GM10248 (cell line): ENCODE measurements at regions of chr17 and their contacts with region 1.

Region 1: GRCh38 chr17:27299384-27300049 is 5.6 kb downstream of the WSB1 start:
- DNase-seq: no peak
- CTCF ChIP-seq: no peak

Region 2: GRCh38 chr17:27367121-27367991 is 67.8 kb after region 1 on chr17:
- CTCF ChIA-PET with region 1: no interaction called
- POLR2A ChIA-PET with region 1: no interaction called
- DNase-seq: no peak
- CTCF ChIP-seq: no peak

Region 3: DNA sequence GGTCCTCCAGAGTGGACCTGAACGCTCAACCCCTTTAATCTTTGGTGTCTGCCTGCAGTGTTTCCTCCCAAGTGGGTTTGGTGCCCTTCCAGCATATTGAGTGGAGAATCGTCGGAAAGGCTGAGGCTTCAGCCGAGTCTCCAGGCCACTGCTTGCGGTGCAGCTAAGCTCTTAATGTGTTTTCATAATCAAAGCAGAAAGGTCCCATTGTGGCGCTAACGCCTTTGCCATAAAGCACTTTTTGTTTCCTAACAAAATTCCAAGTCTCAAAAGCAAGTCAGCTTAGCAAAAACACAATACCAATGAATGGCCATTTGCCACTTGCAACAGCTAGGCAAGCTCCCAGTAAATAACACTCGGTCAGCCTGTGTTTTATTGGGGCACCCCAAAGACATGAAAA is 214.3 kb after region 1 on chr17:
- CTCF ChIA-PET with region 1: no interaction called
- POLR2A ChIA-PET with region 1: no interaction called
- DNase-seq: no peak
- CTCF ChIP-seq: no peak

Region 4: GRCh38 chr17:27529230-27529796 is 229.8 kb after region 1 on chr17:
- CTCF ChIA-PET with region 1: no interaction called
- POLR2A ChIA-PET with region 1: no interaction called
- DNase-seq: no peak
- CTCF ChIP-seq: no peak

Region 5: DNA sequence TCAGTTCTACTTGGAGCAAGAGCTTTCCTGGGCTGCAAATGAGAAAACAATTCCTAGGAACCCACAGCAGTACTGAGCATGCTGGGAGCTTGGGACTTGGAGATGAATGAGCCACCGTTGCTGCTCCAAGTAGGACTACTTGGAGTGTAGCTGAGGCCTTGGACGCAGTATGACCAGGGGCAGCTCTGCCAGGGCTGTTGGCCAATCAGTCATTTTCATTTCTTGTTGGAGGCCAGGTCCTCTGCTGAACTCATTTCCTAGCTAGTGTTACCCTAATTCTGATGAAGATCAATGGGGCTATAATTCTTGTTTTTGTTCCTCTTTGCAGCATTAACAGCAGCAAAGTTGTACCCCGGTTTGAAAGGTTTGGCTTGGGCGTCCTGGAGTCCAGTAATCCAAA is 323.5 kb after region 1 on chr17:
- CTCF ChIA-PET with region 1: no interaction called
- POLR2A ChIA-PET with region 1: interaction called, 10 read pairs
- DNase-seq: no peak
- CTCF ChIP-seq: no peak